Ovary (tissue), 10 donors: ENCODE measurements at regions of chr1 and their contacts with region 1.

Region 1: GRCh38 chr1:115764541-115764940 is 4.0 kb downstream of the CASQ2 start:
- DNase-seq: no peak
- H3K4me3 ChIP-seq: no peak overlapping the region
- H3K27ac ChIP-seq: no peak overlapping the region
- H3K4me1 ChIP-seq: no peaks in the 10 kb centered on the region
- H3K27me3 ChIP-seq: no peaks in the 10 kb centered on the region
- CTCF ChIP-seq: no peak
- EP300 ChIP-seq: no peak
- POLR2A ChIP-seq: no peak

Region 2: GRCh38 chr1:115702959-115703358 is 61.6 kb before region 1 on chr1:
- intact Hi-C with region 1: no loop called
- DNase-seq: no peak
- H3K4me3 ChIP-seq: no peak overlapping the region
- H3K27ac ChIP-seq: no peak overlapping the region
- H3K4me1 ChIP-seq: no peaks in the 10 kb centered on the region
- H3K27me3 ChIP-seq: no peaks in the 10 kb centered on the region
- CTCF ChIP-seq: no peak
- EP300 ChIP-seq: no peak
- POLR2A ChIP-seq: no peak

Region 3: DNA sequence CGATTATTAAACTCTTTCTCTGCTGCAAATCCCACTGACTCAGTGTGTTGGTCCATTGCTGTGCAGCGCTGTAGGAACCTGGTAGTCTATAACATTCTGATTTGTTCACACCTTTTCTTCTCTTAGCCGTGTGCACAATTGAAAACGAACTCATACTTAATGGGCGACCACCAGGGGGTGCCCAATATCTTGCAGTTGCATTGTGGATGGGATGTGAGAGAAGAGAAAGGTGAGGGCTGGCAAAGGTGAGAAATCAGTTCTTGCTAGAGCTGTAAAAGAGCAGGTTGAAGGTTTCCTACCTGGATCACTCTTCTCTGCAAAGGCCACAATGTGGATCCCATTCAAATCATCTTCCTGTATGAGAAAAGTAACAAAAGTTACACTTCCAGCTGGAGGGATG is 47.0 kb before region 1 on chr1:
- intact Hi-C with region 1: loop called in 2 of 4 experiments (anchors 5 to 10 kb)
- DNase-seq: peak in 4 of 5 donors; percentile 33 to 57 (median 40)
- H3K4me3 ChIP-seq: no peak overlapping the region
- H3K27ac ChIP-seq: no peak overlapping the region
- H3K4me1 ChIP-seq: no peaks in the 10 kb centered on the region
- H3K27me3 ChIP-seq: no peaks in the 10 kb centered on the region
- CTCF ChIP-seq: peak in 2 of 3 donors; percentile 24 to 32
- EP300 ChIP-seq: no peak
- POLR2A ChIP-seq: no peak